Transverse colon (tissue), 4 donors: ENCODE measurements at regions of chr20 and their contacts with region 1.

Region 1: GRCh38 chr20:19692685-19693119 is 65.4 kb upstream of the RIN2 start:
- DNase-seq: peak; percentile 63
- H3K4me3 ChIP-seq: no peak overlapping the region
- H3K27ac ChIP-seq: no peak overlapping the region
- H3K4me1 ChIP-seq: peaks cover 0 to 10% (median 0%) of the 10 kb centered on the region in 4 donors
- H3K27me3 ChIP-seq: no peaks in the 10 kb centered on the region
- CTCF ChIP-seq: peak; percentile 88 to 96 (median 94)
- EP300 ChIP-seq: no peak
- POLR2A ChIP-seq: no peak

Region 2: DNA sequence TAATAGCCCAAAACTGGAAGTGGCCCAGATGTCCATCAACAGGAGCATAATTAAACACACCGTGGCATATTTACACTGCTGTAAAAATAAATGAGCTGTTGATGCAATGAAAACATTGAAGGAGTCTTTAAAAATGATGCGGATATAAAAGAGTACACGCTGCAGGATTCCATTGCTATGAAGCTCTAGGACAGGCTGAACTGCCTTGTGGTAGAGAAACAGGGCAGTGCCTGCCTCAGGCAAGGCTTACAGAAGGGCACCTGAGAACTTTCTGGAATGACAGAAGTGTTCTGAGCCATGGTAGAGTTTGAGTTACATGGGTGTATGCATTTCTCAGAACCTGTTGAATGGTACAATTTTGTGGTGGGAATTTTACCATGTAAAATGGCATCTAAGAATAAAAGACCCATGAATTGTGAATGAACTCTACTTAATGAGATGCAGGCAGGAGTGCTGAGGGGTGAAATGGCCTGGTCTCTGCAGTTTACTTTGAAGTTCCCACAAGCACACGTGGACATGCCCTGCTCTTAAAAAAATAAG is 20.1 kb after region 1 on chr20:
- in situ Hi-C with region 1: no loop called
- intact Hi-C with region 1: no loop called
- DNase-seq: no peak
- H3K4me3 ChIP-seq: no peak overlapping the region
- H3K27ac ChIP-seq: peak overlapping the region; percentile 21 to 72 (median 35)
- H3K4me1 ChIP-seq: peaks cover 19 to 58% (median 29%) of the 10 kb centered on the region in 4 donors
- H3K27me3 ChIP-seq: no peaks in the 10 kb centered on the region
- CTCF ChIP-seq: no peak
- EP300 ChIP-seq: no peak
- POLR2A ChIP-seq: no peak

Region 3: GRCh38 chr20:19784511-19785172 is 91.9 kb after region 1 on chr20:
- in situ Hi-C with region 1: loop called in 2 of 4 experiments (anchors 10 to 25 kb)
- intact Hi-C with region 1: no loop called
- DNase-seq: peak; percentile 36
- H3K4me3 ChIP-seq: no peak overlapping the region
- H3K27ac ChIP-seq: peak overlapping the region; percentile 45 to 71 (median 60)
- H3K4me1 ChIP-seq: peaks cover 8 to 38% (median 25%) of the 10 kb centered on the region in 4 donors
- H3K27me3 ChIP-seq: no peaks in the 10 kb centered on the region
- CTCF ChIP-seq: peak; percentile 72 to 83 (median 82)
- EP300 ChIP-seq: no peak
- POLR2A ChIP-seq: no peak

Region 4: GRCh38 chr20:19794941-19795340 is 102.2 kb after region 1 on chr20:
- in situ Hi-C with region 1: loop called in 2 of 4 experiments (anchors 10 to 25 kb)
- intact Hi-C with region 1: no loop called
- DNase-seq: no peak
- H3K4me3 ChIP-seq: no peak overlapping the region
- H3K27ac ChIP-seq: no peak overlapping the region
- H3K4me1 ChIP-seq: no peaks in the 10 kb centered on the region
- H3K27me3 ChIP-seq: no peaks in the 10 kb centered on the region
- CTCF ChIP-seq: no peak
- EP300 ChIP-seq: no peak
- POLR2A ChIP-seq: no peak

Region 5: GRCh38 chr20:19995220-19995863 is 302.6 kb after region 1 on chr20:
- in situ Hi-C with region 1: loop called in 1 of 4 experiments (anchors 10 kb)
- intact Hi-C with region 1: loop called (anchors 5 kb)
- DNase-seq: no peak
- H3K4me3 ChIP-seq: no peak overlapping the region
- H3K27ac ChIP-seq: peak overlapping the region; percentile 49 to 84 (median 73)
- H3K4me1 ChIP-seq: peaks cover 16 to 55% (median 21%) of the 10 kb centered on the region in 4 donors
- H3K27me3 ChIP-seq: no peaks in the 10 kb centered on the region
- CTCF ChIP-seq: peak; percentile 73 to 86 (median 75)
- EP300 ChIP-seq: no peak
- POLR2A ChIP-seq: no peak

Region 6: DNA sequence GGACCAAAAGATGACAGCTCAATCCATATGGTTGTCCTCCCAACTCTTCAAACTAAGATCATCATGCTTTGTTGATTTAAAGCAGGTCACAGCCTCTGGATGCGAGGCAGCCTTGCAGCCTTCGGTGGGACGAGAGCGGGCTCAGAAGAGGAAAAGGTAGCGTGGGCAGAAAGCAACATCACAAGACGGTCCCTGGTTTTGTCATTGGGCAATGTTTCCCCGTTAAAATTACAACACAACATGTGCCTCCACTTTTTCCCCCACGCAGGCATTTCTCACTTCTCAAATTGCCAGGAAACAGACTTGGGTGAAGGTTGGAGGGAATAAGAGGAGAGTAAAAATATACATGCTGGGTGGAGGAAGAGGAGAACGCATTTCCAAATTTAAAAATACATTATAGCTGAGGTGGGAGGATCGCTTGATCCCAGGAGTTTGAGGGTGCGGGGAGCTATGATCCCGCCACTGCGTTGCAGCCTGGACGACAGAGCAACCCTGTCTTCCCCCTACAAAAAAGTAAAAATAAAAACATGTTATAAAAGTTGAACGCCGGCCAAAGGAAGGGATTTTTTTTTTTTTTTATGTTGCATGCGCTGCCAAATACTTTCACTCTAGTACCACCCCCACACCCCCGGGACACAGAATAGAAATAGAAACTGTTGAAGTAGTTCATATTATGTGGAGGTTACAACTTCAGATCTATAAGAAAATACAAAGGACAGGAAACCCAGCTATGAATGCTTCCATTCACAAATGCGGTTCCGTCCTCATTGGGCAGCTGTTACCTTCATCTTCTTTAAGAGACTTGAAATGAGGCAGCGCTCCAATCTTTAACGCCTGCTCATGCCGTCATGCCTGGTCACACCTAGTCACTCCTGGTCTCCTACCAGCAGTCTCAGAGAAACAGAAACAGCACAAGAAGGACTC is 310.6 kb after region 1 on chr20:
- in situ Hi-C with region 1: loop called in 2 of 4 experiments (anchors 5 to 10 kb)
- intact Hi-C with region 1: no loop called
- DNase-seq: peak; percentile 27
- H3K4me3 ChIP-seq: no peak overlapping the region
- H3K27ac ChIP-seq: peak overlapping the region; percentile 49 to 74 (median 64)
- H3K4me1 ChIP-seq: peaks cover 4 to 27% (median 9%) of the 10 kb centered on the region in 4 donors
- H3K27me3 ChIP-seq: no peaks in the 10 kb centered on the region
- CTCF ChIP-seq: no peak
- EP300 ChIP-seq: no peak
- POLR2A ChIP-seq: no peak

Region 7: DNA sequence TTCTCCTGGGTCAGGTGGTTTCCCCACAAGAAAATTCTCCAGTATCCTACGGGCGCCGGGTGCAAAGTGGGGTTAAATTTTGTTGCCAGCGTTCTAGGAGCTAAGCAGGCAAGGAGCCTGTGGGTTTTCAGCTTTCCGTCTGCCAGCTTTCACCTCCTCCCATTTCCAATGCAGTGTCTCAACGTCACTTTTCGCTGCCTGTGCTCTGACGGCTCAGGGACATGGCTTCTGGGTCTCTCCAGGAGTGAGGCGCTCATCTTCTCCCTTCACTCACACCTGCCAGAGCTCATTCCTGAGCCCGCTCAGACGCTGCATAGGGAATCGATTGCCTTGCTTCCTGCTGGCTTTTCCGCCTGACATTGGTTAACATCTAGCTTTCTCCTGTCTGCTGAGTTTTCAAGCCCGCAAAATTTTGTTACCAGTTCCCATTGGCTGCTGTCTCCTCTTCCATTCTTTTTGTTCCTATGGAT is 317.1 kb after region 1 on chr20:
- in situ Hi-C with region 1: loop called in 2 of 4 experiments (anchors 5 to 10 kb)
- intact Hi-C with region 1: no loop called
- DNase-seq: no peak
- H3K4me3 ChIP-seq: no peak overlapping the region
- H3K27ac ChIP-seq: peak overlapping the region; percentile 56 to 73 (median 68)
- H3K4me1 ChIP-seq: peaks cover 8 to 43% (median 13%) of the 10 kb centered on the region in 4 donors
- H3K27me3 ChIP-seq: no peaks in the 10 kb centered on the region
- CTCF ChIP-seq: no peak
- EP300 ChIP-seq: no peak
- POLR2A ChIP-seq: no peak

Region 8: GRCh38 chr20:20102716-20103258 is 410.1 kb after region 1 on chr20:
- in situ Hi-C with region 1: no loop called
- intact Hi-C with region 1: no loop called
- DNase-seq: no peak
- H3K4me3 ChIP-seq: no peak overlapping the region
- H3K27ac ChIP-seq: no peak overlapping the region
- H3K4me1 ChIP-seq: no peaks in the 10 kb centered on the region
- H3K27me3 ChIP-seq: no peaks in the 10 kb centered on the region
- CTCF ChIP-seq: no peak
- EP300 ChIP-seq: no peak
- POLR2A ChIP-seq: no peak